ENCODE measurements at regions of chr1 and their contacts with region 1.

Region 1: DNA sequence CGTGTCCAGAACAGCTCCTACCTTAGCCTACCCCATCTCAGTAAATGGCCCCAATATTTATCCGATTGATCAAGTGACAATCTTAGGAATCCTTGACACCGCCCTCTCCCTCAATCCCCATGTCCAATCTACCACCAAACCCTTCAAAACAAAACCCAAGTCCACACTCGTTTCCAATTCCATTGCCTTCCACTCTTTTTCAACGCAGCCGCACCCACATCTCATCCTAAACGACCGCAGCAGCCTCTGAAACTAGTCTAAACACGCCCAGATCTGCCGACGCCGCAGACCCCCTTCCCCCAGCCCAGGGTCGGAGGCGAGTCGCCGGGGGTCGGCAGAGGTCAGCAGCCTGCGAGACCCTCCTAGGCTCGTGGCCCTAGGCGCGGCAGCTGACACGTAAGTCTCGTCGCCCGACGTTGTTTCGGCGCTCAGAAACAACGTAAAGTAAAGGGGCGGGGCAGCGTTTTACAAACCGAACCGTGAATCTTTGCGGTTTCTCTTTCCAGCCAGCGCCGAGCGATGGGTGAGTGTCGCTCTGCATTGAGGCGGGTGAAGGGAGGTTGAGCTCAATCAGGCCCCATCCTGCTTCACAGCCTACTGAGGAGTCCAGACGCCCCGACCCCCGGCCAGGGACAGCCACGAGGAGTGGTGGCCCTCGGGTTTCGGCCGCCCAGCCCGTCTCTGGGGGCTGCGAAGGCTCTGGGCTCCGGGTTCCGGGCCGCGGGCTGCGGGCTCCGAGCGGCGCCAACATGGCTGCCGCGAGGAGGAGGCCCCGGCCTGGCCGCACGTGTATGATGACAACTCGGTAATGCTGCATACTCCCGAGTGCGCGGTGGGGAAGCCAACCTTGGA is at the start of gene RPS8:
- DNase-seq: peak; percentile 85 to 94
- H3K4me3 ChIP-seq: peak within 1 kb of the TSS; percentile 68 to 95 (median 84)
- H3K27ac ChIP-seq: peak within 1 kb of the TSS; percentile 85
- H3K4me1 ChIP-seq: peaks cover 0 to 8% (median 2%) of the 10 kb centered on the region in 4 experiments; a peak in 5 of 7 replicates
- H3K27me3 ChIP-seq: no peaks in the 10 kb centered on the region
- CTCF ChIP-seq: no peak
- EP300 ChIP-seq: peak in 1 of 2 experiments; percentile 51; a peak in 1 of 3 replicates
- POLR2A ChIP-seq: peak; percentile 98 to 99
- RAD21 ChIP-seq: 0 out of 4 replicates have a peak, but pooled peaks of 1 of the 2 experiments have one; percentile 3
- total RNA-seq, gene RPS8: 2,387 and 2,407 TPM in 2 replicates

Region 2: GRCh38 chr1:44730741-44731512 is 44.4 kb before region 1 on chr1 and contains the start of gene RNU5D-1:
- CTCF ChIA-PET with region 1: interaction called, 6 read pairs
- POLR2A ChIA-PET with region 1: interaction called, 428 read pairs
- DNase-seq: peak in 1 of 2 experiments; percentile 94
- H3K4me3 ChIP-seq: peak within 1 kb of the TSS in 1 of 4 experiments; percentile 31; a peak in 1 of 8 replicates
- H3K27ac ChIP-seq: peak within 1 kb of the TSS; percentile 94
- H3K4me1 ChIP-seq: peaks cover 0 to 3% (median under 1%) of the 10 kb centered on the region in 4 experiments; a peak in 4 of 7 replicates
- H3K27me3 ChIP-seq: no peaks in the 10 kb centered on the region
- CTCF ChIP-seq: peak; percentile 48 to 80 (median 55)
- EP300 ChIP-seq: 0 out of 3 replicates have a peak, but pooled peaks of 1 of the 2 experiments have one; percentile 30
- POLR2A ChIP-seq: peak; percentile 99
- RAD21 ChIP-seq: peak; percentile 14 to 32; a peak in 1 of 4 replicates
- total RNA-seq, gene RNU5D-1: 17.4 TPM in 1 of 2 replicates, not detected in the other

Region 3: GRCh38 chr1:44757420-44757819 is 17.9 kb before region 1 on chr1:
- CTCF ChIA-PET with region 1: no interaction called
- POLR2A ChIA-PET with region 1: interaction called, 151 read pairs
- DNase-seq: no peak
- H3K4me3 ChIP-seq: no peak overlapping the region
- H3K27ac ChIP-seq: no peak overlapping the region
- H3K4me1 ChIP-seq: no peaks in the 10 kb centered on the region
- H3K27me3 ChIP-seq: no peaks in the 10 kb centered on the region
- CTCF ChIP-seq: no peak
- EP300 ChIP-seq: no peak
- POLR2A ChIP-seq: no peak
- RAD21 ChIP-seq: no peak

Region 4: DNA sequence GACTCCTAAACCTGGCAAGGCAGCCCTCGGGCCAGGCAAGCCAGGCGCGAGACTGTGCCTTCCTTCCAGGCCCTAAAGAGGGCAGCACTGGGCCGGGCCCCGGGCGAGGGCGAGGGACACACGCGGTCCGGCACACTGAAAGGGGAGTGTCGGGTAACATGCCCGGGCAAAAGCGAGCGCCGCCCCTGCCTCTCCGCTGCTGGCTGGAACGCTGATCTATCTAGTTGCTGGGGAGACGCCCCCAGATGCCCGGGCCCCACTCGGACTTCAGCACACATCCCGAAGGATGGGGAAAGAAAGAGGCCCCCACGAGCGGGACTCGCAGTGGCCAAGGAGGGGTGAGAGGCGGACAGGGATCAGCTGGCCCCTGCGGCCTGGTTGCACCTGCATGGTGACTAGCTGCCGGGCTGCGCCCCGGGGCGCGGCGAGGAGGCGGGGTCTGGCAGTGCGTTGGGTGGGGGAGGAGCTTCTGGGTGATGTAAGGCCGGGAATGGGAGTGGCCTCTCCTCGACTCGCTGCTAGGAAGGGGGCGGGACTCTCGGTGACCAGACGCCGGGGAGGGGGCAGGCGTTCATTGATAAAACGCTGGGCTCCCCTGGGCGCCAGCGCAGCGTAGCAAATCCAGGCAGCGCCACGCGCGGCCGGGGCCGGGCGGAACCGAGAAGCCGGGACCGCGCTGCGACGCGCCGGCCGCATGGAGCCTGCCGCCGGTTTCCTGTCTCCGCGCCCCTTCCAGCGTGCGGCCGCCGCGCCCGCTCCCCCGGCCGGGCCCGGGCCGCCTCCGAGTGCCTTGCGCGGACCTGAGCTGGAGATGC is 24.7 kb after region 1 on chr1 and contains the start of gene PLK3:
- CTCF ChIA-PET with region 1: interaction called, 3 read pairs
- POLR2A ChIA-PET with region 1: interaction called, 61 read pairs
- DNase-seq: peak; percentile 93 to 98
- H3K4me3 ChIP-seq: peak within 1 kb of the TSS; percentile 60 to 76 (median 66)
- H3K27ac ChIP-seq: peak within 1 kb of the TSS; percentile 91
- H3K4me1 ChIP-seq: peaks cover 0 to 5% (median 2%) of the 10 kb centered on the region in 4 experiments; a peak in 3 of 7 replicates
- H3K27me3 ChIP-seq: peaks cover 0 to 5% (median 0%) of the 10 kb centered on the region in 4 experiments; a peak in 2 of 7 replicates
- CTCF ChIP-seq: peak in 2 of 3 experiments; percentile 89 to 97; a peak in 3 of 4 replicates
- EP300 ChIP-seq: no peak
- POLR2A ChIP-seq: peak in 1 of 2 experiments; percentile 98; a peak in 2 of 3 replicates
- RAD21 ChIP-seq: peak; percentile 71 to 79
- total RNA-seq, gene PLK3: 7.9 and 9.7 TPM in 2 replicates

Region 5: GRCh38 chr1:44812822-44813543 is 37.7 kb after region 1 on chr1:
- CTCF ChIA-PET with region 1: interaction called, 3 read pairs
- POLR2A ChIA-PET with region 1: interaction called, 98 read pairs
- DNase-seq: peak in 1 of 2 experiments; percentile 78
- H3K4me3 ChIP-seq: peak overlapping the region; percentile 32 to 73 (median 64)
- H3K27ac ChIP-seq: no peak overlapping the region
- H3K4me1 ChIP-seq: peaks cover 8 to 26% (median 18%) of the 10 kb centered on the region in 4 experiments
- H3K27me3 ChIP-seq: peaks cover 0 to 8% (median 1%) of the 10 kb centered on the region in 4 experiments; a peak in 4 of 7 replicates
- CTCF ChIP-seq: no peak
- EP300 ChIP-seq: no peak
- POLR2A ChIP-seq: no peak
- RAD21 ChIP-seq: no peak

Region 6: GRCh38 chr1:44826375-44827196 is 51.3 kb after region 1 on chr1:
- CTCF ChIA-PET with region 1: no interaction called
- POLR2A ChIA-PET with region 1: interaction called, 98 read pairs
- DNase-seq: no peak
- H3K4me3 ChIP-seq: no peak overlapping the region
- H3K27ac ChIP-seq: no peak overlapping the region
- H3K4me1 ChIP-seq: peaks cover 0 to 9% (median 2%) of the 10 kb centered on the region in 4 experiments; a peak in 6 of 7 replicates
- H3K27me3 ChIP-seq: no peaks in the 10 kb centered on the region
- CTCF ChIP-seq: no peak
- EP300 ChIP-seq: no peak
- POLR2A ChIP-seq: no peak
- RAD21 ChIP-seq: no peak